ENCODE measurements at regions of chr16 and their contacts with region 1.

Region 1: GRCh38 chr16:70679666-70680494 is 6.0 kb downstream of the MTSS2 start:
- DNase-seq: peak in 1 of 2 donors; percentile 50
- ATAC-seq: peak in 4 of 8 donors; percentile 32 to 62 (median 60)
- H3K4me3 ChIP-seq: no peak overlapping the region
- H3K27ac ChIP-seq: peak overlapping the region in 4 of 10 donors; percentile 9 to 52 (median 36)
- H3K4me1 ChIP-seq: peaks cover 35 to 75% (median 48%) of the 10 kb centered on the region in 9 donors
- H3K27me3 ChIP-seq: peaks cover 0 to 3% (median 0%) of the 10 kb centered on the region in 7 donors
- CTCF ChIP-seq: peak; percentile 31 to 83 (median 58)

Region 2: GRCh38 chr16:70661918-70662641 is 17.8 kb before region 1 on chr16:
- intact Hi-C with region 1: no loop called
- DNase-seq: no peak
- ATAC-seq: peak in 7 of 8 donors; percentile 8 to 48 (median 22)
- H3K4me3 ChIP-seq: no peak overlapping the region
- H3K27ac ChIP-seq: peak overlapping the region in 2 of 10 donors; percentile 3 to 15
- H3K4me1 ChIP-seq: peaks cover 0 to 26% (median 9%) of the 10 kb centered on the region in 9 donors
- H3K27me3 ChIP-seq: no peaks in the 10 kb centered on the region
- CTCF ChIP-seq: no peak

Region 3: DNA sequence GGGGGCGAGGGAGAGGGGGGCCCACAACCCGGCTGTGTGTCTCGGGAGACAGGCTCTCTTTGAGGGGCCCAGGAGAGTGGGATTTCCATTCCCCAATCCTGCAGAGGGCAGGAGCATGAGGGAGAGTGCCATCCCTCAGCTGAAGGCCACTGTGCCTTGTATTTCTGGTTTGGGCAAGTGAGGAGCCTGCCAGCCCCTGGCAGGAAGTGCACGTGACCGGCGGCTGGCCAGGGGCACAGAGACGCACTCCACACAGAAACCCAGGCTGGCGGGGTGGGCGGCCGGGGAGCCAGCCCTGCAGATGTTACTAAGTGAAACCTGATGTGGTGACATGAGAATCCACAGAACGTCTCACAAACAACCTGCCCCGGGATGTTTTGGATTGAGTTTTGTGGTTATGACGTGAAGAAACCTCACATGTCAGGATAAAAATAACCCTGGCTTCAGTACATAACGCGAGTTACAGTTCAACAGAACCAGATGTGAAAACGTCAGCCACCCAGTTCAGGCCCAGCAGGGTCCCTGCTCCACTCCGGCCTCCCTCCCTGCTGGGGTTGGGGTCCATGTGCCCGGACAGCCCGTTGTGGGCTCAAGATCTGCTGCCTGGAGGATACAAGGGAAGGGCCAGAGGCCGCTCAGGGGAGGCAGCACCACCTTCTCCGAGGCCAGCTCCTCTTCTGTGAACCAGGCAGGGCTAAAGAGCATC is 57.6 kb after region 1 on chr16:
- intact Hi-C with region 1: loop called (anchors 2 to 10 kb)
- DNase-seq: peak; percentile 74 to 76
- ATAC-seq: peak; percentile 60 to 85 (median 72)
- H3K4me3 ChIP-seq: peak overlapping the region in 1 of 10 donors; percentile 8
- H3K27ac ChIP-seq: peak overlapping the region; percentile 81 to 92 (median 86)
- H3K4me1 ChIP-seq: peaks cover 32 to 75% (median 45%) of the 10 kb centered on the region in 9 donors
- H3K27me3 ChIP-seq: no peaks in the 10 kb centered on the region
- CTCF ChIP-seq: peak in 1 of 9 donors; percentile 17

Region 4: GRCh38 chr16:70746708-70747424 is 67.0 kb after region 1 on chr16:
- intact Hi-C with region 1: loop called in 3 of 10 experiments (anchors 5 to 10 kb)
- DNase-seq: peak; percentile 43 to 79
- ATAC-seq: peak; percentile 40 to 77 (median 62)
- H3K4me3 ChIP-seq: no peak overlapping the region
- H3K27ac ChIP-seq: peak overlapping the region in 6 of 10 donors; percentile 7 to 75 (median 50)
- H3K4me1 ChIP-seq: peaks cover 29 to 70% (median 49%) of the 10 kb centered on the region in 9 donors
- H3K27me3 ChIP-seq: no peaks in the 10 kb centered on the region
- CTCF ChIP-seq: no peak

Region 5: GRCh38 chr16:70759666-70760065 is 79.8 kb after region 1 on chr16:
- intact Hi-C with region 1: loop called in 2 of 10 experiments (anchors 5 kb)
- DNase-seq: no peak
- ATAC-seq: no peak
- H3K4me3 ChIP-seq: no peak overlapping the region
- H3K27ac ChIP-seq: no peak overlapping the region
- H3K4me1 ChIP-seq: no peaks in the 10 kb centered on the region
- H3K27me3 ChIP-seq: no peaks in the 10 kb centered on the region
- CTCF ChIP-seq: no peak